ENCODE measurements at regions of chr12 and their contacts with region 1.

Region 1: GRCh38 chr12:26113853-26114719 is 10.8 kb downstream of the BHLHE41 start:
- DNase-seq: peak; percentile 85 to 98 (median 90)

Region 2: GRCh38 chr12:25958428-25959070 is 155.5 kb before region 1 on chr12 and contains the start of gene RASSF8:
- intact Hi-C with region 1: no loop called
- DNase-seq: peak in 9 of 10 donors; percentile 52 to 95 (median 66)

Region 3: GRCh38 chr12:26514364-26514763 is 400.3 kb after region 1 on chr12:
- intact Hi-C with region 1: loop called (anchors 10 kb)
- DNase-seq: no peak

Measured in posterior cingulate gyrus (tissue), 11 donors.